Activated naive CD4-positive, alpha-beta T cell treated with anti-CD3 and anti-CD28 coated beads for 36 hours (primary cell): ENCODE measurements at regions of chr12 and their contacts with region 1.

Region 1: DNA sequence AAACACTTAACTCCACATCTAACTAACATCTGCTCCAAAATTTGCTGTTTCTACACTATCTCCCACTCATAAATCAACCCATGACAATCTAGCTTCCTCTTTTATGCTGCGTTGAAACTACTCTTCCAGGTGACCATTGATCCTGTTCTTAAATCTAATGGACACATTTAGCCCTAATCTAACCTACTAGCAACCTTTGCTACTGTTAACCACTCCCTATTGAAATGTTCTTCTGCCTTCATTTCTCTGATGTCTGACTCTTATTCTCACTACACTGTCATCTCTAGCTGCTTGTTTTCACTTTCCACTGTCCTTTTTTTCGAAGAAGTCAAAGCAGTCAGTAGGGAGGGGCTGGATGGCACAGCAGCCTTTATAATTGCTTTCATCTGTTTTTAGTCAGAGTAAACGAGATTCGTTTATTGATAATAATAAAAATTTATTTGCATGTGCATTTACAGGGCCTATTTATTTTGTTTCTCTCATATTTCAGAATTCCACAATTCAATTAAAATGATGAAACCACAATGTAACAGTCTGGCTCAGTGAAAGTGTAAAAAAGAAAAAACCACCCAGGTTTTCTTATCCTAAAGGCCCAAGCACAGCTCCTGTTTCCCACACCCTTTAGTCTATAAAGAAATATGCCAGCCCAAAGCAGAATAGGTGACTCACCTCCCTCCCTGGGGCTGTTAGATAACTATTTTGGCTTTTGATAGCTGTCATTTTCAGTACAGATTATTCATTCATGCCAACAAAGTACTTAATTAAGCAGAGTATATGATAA is 44.9 kb downstream of the ATP2B1 start:
- DNase-seq: peak; percentile 38
- H3K4me3 Mint-ChIP-seq: peak overlapping the region; percentile 16
- H3K27ac Mint-ChIP-seq: peak overlapping the region; percentile 55
- H3K4me1 Mint-ChIP-seq: peaks cover 65% of the 10 kb centered on the region
- H3K27me3 Mint-ChIP-seq: no peaks in the 10 kb centered on the region

Region 2: GRCh38 chr12:89597770-89598169 is 66.0 kb before region 1 on chr12:
- CTCF ChIA-PET with region 1: no interaction called
- intact Hi-C with region 1: loop called (anchors 1 kb)
- DNase-seq: no peak
- H3K4me3 Mint-ChIP-seq: no peak overlapping the region
- H3K27ac Mint-ChIP-seq: peak overlapping the region; percentile 66
- H3K4me1 Mint-ChIP-seq: peaks cover 23% of the 10 kb centered on the region
- H3K27me3 Mint-ChIP-seq: no peaks in the 10 kb centered on the region

Region 3: DNA sequence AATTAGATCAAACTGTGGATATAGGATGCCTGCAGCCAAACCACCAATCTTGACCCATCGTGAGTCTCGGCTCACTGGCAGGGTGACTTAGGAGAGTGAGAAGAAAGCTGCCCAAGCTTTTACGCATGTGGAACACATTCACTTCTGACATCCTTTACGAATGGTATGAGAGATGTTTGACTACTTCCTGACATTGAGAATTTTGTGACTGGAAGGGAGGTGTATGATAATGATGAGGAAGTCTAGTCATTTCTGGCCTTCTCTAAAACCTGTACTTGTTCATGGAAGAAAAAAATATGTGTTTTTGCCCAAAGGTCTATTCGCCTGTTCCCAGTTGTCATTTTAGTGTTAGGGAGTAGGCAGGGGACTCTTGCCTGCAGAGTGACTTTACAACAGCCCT is 272.1 kb after region 1 on chr12:
- CTCF ChIA-PET with region 1: no interaction called
- intact Hi-C with region 1: loop called (anchors 5 kb)
- DNase-seq: no peak
- H3K4me3 Mint-ChIP-seq: no peak overlapping the region
- H3K27ac Mint-ChIP-seq: peak overlapping the region; percentile 53
- H3K4me1 Mint-ChIP-seq: peaks cover 28% of the 10 kb centered on the region
- H3K27me3 Mint-ChIP-seq: no peaks in the 10 kb centered on the region

Region 4: GRCh38 chr12:90216815-90217214 is 553.0 kb after region 1 on chr12:
- CTCF ChIA-PET with region 1: no interaction called
- intact Hi-C with region 1: no loop called
- DNase-seq: no peak
- H3K4me3 Mint-ChIP-seq: no peak overlapping the region
- H3K27ac Mint-ChIP-seq: no peak overlapping the region
- H3K4me1 Mint-ChIP-seq: no peaks in the 10 kb centered on the region
- H3K27me3 Mint-ChIP-seq: peaks cover 9% of the 10 kb centered on the region